ENCODE measurements at regions of chr13 and their contacts with region 1.

Region 1: DNA sequence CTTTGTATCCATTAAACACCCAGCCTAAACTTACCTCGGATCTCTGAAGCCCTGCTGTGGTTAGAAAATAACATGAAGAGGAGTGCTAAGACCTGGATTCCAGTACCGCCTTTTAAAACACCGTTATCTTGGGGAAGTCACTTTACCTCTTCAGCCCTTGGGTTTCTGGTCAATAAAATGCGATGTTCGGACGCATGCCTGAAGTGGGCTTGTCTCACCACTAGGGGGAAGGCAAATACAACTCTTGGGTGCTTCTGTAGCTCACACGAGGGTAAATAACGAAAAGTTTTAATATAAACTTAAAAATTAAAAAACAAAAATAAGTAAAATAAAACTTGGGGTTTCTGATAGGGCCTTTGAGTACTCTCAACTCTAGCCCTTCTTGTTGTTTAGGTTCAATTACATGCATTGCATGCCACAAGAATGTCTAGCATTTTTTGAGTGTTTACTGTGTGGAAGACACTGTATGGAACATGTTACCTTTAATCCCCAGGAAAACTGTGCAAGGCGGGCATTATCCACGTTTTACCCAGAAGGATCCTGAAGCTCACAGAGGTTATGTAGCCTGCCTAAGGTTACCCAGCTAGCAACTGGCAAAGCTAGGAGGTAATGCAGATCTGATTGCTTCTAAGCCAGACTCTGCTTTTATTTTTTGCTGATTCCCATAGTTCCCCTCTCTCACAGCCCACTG is 240.4 kb downstream of the LMO7 start:
- DNase-seq: peak; percentile 62
- H3K4me3 Mint-ChIP-seq: peak overlapping the region; percentile 14
- H3K27ac Mint-ChIP-seq: no peak overlapping the region
- H3K4me1 Mint-ChIP-seq: peaks cover 15% of the 10 kb centered on the region
- H3K27me3 Mint-ChIP-seq: peaks cover 7% of the 10 kb centered on the region

Region 2: DNA sequence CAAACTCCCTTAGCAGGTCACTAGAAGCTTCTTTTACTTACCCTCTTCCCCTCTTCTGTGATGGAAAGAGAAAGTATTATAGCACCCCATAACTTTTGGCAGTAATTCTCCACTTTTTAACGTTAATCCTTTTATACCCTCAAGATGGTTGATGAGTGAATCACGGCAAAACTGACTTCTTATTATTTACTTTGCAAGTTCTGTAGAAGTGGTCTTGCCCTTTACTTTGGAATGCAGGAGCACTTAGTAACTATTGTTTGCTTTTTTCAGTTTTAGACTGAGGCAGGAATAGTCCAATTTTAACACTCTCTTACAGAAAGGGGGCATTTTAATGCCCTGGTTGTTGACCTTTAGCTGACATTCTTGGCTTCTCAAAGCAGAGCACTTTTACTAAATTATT is 19.8 kb after region 1 on chr13:
- CTCF ChIA-PET with region 1: interaction called, 10 read pairs
- POLR2A ChIA-PET with region 1: no interaction called
- DNase-seq: no peak
- H3K4me3 Mint-ChIP-seq: no peak overlapping the region
- H3K27ac Mint-ChIP-seq: no peak overlapping the region
- H3K4me1 Mint-ChIP-seq: no peaks in the 10 kb centered on the region
- H3K27me3 Mint-ChIP-seq: peaks cover 2% of the 10 kb centered on the region

Region 3: GRCh38 chr13:76094645-76095044 is 218.1 kb after region 1 on chr13:
- CTCF ChIA-PET with region 1: no interaction called
- POLR2A ChIA-PET with region 1: no interaction called
- DNase-seq: no peak
- H3K4me3 Mint-ChIP-seq: no peak overlapping the region
- H3K27ac Mint-ChIP-seq: no peak overlapping the region
- H3K4me1 Mint-ChIP-seq: no peaks in the 10 kb centered on the region
- H3K27me3 Mint-ChIP-seq: no peaks in the 10 kb centered on the region

Region 4: GRCh38 chr13:76473552-76474134 is 597.1 kb after region 1 on chr13:
- CTCF ChIA-PET with region 1: interaction called, 36 read pairs
- POLR2A ChIA-PET with region 1: no interaction called
- DNase-seq: peak; percentile 70
- H3K4me3 Mint-ChIP-seq: no peak overlapping the region
- H3K27ac Mint-ChIP-seq: no peak overlapping the region
- H3K4me1 Mint-ChIP-seq: no peaks in the 10 kb centered on the region
- H3K27me3 Mint-ChIP-seq: peaks cover 3% of the 10 kb centered on the region